Activated CD8-positive, alpha-beta T cell treated with anti-CD3 and anti-CD28 coated beads for 36 hours (primary cell): ENCODE measurements at regions of chr19 and their contacts with region 1.

Region 1: DNA sequence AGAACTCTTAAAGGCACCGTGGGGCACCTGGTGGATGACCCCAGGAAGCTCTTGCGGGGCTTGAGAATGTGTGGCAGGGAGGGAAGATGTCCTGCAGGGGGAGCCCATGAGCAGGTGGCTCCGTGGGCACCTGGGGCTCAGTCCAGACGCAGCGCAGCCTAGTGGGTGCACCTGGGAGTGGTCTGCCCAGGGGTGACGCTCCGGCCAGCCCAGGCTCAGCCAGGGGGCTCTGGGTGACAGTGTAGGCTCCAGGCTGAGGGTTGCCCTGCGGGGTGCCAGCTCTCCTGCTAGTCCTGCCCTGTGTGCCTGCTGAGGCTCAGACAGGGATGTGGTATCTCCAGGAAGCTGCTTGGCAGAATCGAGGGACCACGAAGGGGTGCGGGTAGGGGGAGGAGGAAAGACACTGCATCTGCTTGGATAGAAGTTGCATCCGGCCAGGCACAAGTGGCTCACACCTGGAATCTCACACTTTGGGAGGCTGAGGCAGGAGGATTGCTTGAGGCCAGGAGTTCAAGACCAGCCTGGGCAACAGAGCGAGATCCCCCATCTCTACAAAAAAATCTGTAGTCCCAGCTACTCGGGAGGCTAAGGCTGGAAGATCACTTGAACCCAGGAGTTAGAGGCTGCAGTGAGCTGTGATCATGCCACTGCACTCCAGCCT is 15.0 kb upstream of the PGLS start:
- DNase-seq: peak; percentile 92
- ATAC-seq: peak; percentile 100
- H3K4me3 Mint-ChIP-seq: no peak overlapping the region
- H3K27ac Mint-ChIP-seq: no peak overlapping the region
- H3K4me1 Mint-ChIP-seq: peaks cover 21% of the 10 kb centered on the region
- H3K27me3 Mint-ChIP-seq: no peaks in the 10 kb centered on the region
- CTCF ChIP-seq: peak; percentile 99

Region 2: GRCh38 chr19:17411801-17412200 is 84.7 kb before region 1 on chr19:
- CTCF ChIA-PET with region 1: no interaction called
- POLR2A ChIA-PET with region 1: no interaction called
- intact Hi-C with region 1: no loop called
- DNase-seq: no peak
- ATAC-seq: no peak
- H3K4me3 Mint-ChIP-seq: no peak overlapping the region
- H3K27ac Mint-ChIP-seq: no peak overlapping the region
- H3K4me1 Mint-ChIP-seq: peaks cover 14% of the 10 kb centered on the region
- H3K27me3 Mint-ChIP-seq: no peaks in the 10 kb centered on the region
- CTCF ChIP-seq: no peak

Region 3: DNA sequence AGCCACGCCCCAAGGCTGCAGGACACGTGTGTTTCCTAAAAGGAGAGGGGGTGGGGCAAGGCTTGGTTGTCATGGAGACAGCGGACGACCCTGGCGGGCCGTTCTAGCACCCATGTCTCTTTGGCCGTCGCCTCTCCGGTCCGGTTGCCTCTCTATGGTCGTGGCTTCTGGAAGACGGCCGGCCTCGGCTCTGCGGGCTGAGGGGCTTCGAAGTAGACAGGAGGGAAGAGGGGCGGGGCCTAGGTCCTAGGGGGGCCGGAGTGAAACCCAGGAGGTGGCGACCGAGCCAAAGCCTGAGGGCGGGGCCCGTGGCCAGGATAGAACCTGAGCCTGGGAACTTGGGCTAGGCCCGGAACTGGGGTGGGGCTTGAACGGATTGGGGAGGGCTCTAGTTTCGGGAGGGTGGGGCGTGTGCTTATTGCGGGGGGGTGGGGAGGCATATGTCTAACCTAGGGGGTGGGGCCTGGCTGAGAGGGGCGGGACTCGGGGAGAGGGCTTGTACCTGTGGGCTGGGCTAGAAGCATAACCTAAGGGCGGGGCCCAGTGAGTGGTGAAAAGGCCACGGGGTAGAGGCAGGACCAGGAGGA is 26.9 kb before region 1 on chr19:
- CTCF ChIA-PET with region 1: interaction called, 32 read pairs
- POLR2A ChIA-PET with region 1: interaction called, 3 read pairs
- intact Hi-C with region 1: no loop called
- DNase-seq: peak; percentile 96
- ATAC-seq: peak; percentile 86
- H3K4me3 Mint-ChIP-seq: peak overlapping the region; percentile 92
- H3K27ac Mint-ChIP-seq: peak overlapping the region; percentile 94
- H3K4me1 Mint-ChIP-seq: peaks cover 31% of the 10 kb centered on the region
- H3K27me3 Mint-ChIP-seq: no peaks in the 10 kb centered on the region
- CTCF ChIP-seq: no peak

Region 4: DNA sequence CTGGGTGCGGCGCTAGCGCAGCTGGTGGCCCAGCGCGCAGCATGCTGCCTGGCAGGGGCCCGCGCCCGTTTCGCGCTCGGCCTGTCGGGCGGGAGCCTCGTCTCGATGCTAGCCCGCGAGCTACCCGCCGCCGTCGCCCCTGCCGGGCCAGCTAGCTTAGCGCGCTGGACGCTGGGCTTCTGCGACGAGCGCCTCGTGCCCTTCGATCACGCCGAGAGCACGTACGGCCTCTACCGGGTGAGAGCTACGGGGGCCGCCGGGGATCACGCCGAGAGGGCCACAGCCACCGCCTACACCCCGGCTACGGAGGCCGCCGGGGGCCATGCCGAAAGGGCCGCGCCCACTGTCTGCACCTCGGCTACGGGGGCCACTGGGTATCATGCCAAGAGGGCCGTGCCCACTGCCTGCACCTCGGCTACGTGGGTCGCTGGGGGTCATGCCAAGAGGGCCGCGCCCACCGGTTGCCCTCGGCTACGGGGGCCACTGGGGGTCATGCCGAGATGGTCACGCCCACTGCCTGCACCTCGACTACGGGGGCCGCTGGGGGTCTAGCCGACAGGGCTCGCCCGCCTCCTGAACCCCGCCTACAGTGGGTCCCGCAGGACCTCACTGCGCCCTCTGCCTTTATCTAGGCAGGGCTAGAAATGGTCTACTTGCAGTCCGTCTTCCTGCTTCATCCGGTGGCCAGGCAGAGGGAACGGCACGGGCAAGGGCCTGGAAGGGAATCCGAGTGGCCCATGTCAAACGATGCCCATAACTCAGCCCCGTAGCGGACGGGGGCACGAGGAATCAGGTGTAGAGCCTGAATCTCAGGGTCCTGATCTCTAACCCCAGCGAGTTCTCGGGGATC is 15.5 kb after region 1 on chr19:
- CTCF ChIA-PET with region 1: interaction called, 31 read pairs
- POLR2A ChIA-PET with region 1: interaction called, 7 read pairs
- intact Hi-C with region 1: no loop called
- DNase-seq: peak; percentile 96
- ATAC-seq: peak; percentile 76
- H3K4me3 Mint-ChIP-seq: peak overlapping the region; percentile 87
- H3K27ac Mint-ChIP-seq: peak overlapping the region; percentile 94
- H3K4me1 Mint-ChIP-seq: peaks cover 28% of the 10 kb centered on the region
- H3K27me3 Mint-ChIP-seq: no peaks in the 10 kb centered on the region
- CTCF ChIP-seq: no peak

Region 5: DNA sequence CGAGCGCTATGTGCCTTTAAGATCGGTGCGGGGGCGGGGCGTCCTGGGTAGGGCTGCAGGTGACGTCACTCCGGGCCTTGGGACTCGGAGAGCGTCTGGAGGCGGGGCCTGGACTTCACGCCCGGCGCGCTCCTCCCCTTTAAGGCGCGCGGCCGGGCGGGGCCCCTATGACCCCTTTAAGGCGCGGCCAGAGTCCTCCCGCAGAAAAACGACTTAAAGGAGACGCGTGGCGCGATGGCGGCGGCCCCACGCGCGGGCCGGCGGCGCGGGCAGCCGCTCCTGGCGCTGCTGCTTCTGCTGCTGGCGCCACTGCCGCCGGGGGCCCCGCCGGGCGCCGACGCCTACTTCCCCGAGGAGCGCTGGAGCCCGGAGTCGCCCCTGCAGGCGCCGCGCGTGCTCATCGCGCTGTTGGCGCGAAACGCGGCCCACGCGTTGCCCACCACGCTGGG is 59.0 kb after region 1 on chr19 and contains the start of gene COLGALT1:
- CTCF ChIA-PET with region 1: interaction called, 20 read pairs
- POLR2A ChIA-PET with region 1: interaction called, 4 read pairs
- intact Hi-C with region 1: no loop called
- DNase-seq: peak; percentile 100
- ATAC-seq: peak; percentile 99
- H3K4me3 Mint-ChIP-seq: peak within 1 kb of the TSS; percentile 87
- H3K27ac Mint-ChIP-seq: peak within 1 kb of the TSS; percentile 79
- H3K4me1 Mint-ChIP-seq: peaks cover 10% of the 10 kb centered on the region
- H3K27me3 Mint-ChIP-seq: no peaks in the 10 kb centered on the region
- CTCF ChIP-seq: no peak
- total RNA-seq, gene COLGALT1: 62.1 to 64.2 TPM

Region 6: GRCh38 chr19:17579661-17580244 is 83.3 kb after region 1 on chr19:
- CTCF ChIA-PET with region 1: interaction called, 21 read pairs
- POLR2A ChIA-PET with region 1: no interaction called
- intact Hi-C with region 1: no loop called
- DNase-seq: peak; percentile 54
- ATAC-seq: peak; percentile 73
- H3K4me3 Mint-ChIP-seq: no peak overlapping the region
- H3K27ac Mint-ChIP-seq: no peak overlapping the region
- H3K4me1 Mint-ChIP-seq: no peaks in the 10 kb centered on the region
- H3K27me3 Mint-ChIP-seq: no peaks in the 10 kb centered on the region
- CTCF ChIP-seq: no peak

Region 7: GRCh38 chr19:17629760-17630159 is 133.3 kb after region 1 on chr19:
- CTCF ChIA-PET with region 1: no interaction called
- POLR2A ChIA-PET with region 1: no interaction called
- intact Hi-C with region 1: no loop called
- DNase-seq: no peak
- ATAC-seq: no peak
- H3K4me3 Mint-ChIP-seq: no peak overlapping the region
- H3K27ac Mint-ChIP-seq: no peak overlapping the region
- H3K4me1 Mint-ChIP-seq: no peaks in the 10 kb centered on the region
- H3K27me3 Mint-ChIP-seq: no peaks in the 10 kb centered on the region
- CTCF ChIP-seq: no peak